AG04449 (cell line): ENCODE measurements at regions of chr14 and their contacts with region 1.

Region 1: DNA sequence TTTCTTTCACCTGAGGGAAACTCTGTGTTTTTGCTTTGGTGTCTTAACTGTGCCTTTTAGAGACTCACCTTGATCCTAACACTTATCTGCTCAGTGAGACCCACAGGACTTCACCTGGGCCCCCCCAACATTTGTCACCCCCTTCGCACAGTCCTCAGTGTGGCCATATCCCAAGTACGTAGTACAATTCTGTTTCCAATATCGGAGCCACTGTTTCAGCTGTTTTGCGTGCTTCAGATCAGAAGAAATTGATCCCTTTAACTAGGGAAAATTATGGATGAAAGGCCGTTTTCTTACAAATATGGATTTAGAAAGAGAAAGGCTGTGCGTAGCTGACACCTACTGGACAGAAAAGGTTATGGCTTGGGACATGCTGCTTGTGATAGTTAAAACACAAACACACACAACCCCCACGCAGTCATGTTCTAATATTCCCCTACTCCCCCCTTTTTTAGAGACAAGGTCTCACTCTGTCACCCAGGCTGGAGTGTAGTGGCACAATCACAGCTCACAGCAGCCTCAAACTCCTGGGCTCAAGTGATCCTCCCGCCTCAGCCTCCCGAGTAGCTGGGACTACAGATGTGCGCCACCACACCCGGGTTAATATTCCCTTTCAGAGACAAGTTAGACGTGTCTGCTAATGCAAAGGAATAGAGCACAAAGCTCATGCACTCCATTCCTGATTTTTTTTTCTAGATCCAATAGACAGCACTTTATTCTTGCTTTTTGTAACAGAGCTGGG is 3.6 kb upstream of the SLC7A8 start:
- DNase-seq: no peak
- H3K4me3 ChIP-seq: no peak overlapping the region
- CTCF ChIP-seq: peak; percentile 66

Region 2: DNA sequence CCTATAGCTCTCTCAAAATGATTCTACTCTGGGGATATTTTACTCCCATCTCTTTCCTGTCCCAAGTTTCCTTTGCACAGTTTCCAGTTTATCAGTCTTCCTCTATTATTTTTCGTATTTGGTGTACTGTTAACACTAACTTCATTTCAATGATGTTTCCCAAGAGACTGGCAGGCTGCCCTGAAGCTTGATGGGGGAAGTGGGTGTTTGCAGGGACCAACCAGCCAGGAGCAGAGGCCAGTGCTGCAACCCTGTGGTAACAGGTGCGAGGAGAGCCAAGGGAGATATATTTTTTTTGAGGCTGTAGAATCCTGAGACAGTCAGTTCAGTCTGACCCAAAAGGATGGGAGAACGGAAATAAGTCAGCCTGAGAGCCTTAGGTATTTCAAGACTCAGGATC is 56.2 kb before region 1 on chr14:
- CTCF ChIA-PET with region 1: interaction called, 1,439 read pairs
- POLR2A ChIA-PET with region 1: no interaction called
- DNase-seq: no peak
- H3K4me3 ChIP-seq: no peak overlapping the region
- CTCF ChIP-seq: no peak

Region 3: GRCh38 chr14:23154964-23155587 is 32.0 kb before region 1 on chr14:
- CTCF ChIA-PET with region 1: interaction called, 32 read pairs
- POLR2A ChIA-PET with region 1: interaction called, 4 read pairs
- DNase-seq: peak; percentile 61
- H3K4me3 ChIP-seq: no peak overlapping the region
- CTCF ChIP-seq: no peak

Region 4: DNA sequence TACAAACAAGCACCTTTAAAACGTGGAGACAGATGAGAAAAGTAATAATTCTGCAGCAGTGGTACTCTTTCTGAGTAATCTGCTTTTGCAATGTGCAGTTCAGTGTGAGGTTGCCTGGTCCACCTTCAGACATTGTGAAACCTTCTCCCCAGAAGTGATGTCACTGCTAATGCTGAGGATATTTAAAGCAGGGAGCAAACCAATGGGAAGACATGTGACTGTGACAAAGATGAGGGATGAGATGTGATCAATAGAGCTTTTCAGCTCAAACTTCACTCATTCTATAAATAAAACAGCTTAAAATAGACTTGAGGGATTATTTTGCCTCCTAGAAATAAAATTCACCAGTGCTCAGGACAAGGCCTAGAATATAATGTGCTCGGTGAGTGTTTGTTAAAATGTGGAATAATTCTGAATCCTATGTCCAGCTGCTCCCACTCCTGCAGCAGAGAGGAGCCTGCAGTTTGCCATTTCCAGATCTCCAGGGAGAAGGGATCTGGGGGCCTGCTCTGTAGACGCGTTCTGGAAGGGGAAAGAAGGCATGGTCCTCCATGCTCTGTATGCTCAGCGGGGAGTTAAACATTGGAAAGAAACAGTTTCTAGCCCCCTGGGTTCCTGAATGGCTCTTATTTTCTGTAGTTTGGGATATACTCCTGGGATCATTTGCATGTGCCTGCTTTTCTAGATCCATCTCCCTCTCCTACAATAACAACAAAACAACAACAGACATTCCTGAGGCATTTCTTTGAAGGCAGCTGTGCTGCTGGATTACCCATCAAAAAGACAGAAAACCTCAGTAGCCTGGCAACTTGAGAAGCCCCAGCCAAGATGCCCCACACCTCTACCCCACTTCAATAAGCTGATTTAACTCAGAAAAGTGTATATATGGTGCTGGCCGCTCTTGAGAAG is 12.6 kb before region 1 on chr14:
- CTCF ChIA-PET with region 1: interaction called, 87 read pairs
- POLR2A ChIA-PET with region 1: no interaction called
- DNase-seq: no peak
- H3K4me3 ChIP-seq: no peak overlapping the region
- CTCF ChIP-seq: no peak

Region 5: DNA sequence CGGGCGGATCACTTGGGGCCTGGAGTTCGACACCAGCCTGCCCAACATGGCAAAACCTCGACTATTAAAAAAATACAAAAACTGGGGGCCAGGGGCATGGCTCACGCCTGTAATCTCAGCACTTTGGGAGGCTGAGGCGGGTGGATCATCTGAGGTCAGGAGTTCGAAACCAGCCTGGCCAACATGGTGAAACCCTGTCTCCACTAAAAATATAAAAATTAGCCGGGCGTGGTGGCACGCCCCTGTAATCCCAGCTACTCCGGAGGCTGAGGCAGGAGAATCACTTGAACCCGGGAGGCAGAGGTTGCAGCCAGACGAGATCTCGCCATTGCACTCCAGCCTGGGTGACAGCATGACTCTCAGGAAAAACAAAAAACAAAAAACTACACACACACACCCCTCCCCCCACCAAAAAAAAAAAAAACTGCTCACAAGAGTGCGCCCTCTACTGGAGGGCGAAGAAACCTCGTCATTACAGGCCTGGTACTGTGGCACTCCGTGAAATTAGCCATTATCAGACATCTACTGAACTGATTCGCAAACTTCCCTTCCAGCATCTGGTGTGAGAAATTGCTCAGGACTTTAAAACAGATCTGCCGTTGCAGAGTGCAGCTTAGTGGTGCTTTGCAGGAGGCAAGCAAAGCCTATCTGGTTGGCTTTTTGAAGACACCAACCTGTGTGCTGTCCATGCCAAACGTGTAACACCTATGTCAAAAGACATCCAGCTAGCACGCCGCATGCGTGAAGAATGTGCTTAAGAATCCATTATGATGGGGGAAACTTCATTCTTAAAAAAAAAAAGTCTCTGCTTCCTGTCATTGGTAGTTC is 107.9 kb after region 1 on chr14:
- CTCF ChIA-PET with region 1: interaction called, 12 read pairs
- POLR2A ChIA-PET with region 1: no interaction called
- DNase-seq: no peak
- H3K4me3 ChIP-seq: no peak overlapping the region
- CTCF ChIP-seq: peak; percentile 61

Region 6: GRCh38 chr14:23555882-23556699 is 369.0 kb after region 1 on chr14 and contains the start of gene THTPA:
- CTCF ChIA-PET with region 1: no interaction called
- POLR2A ChIA-PET with region 1: no interaction called
- DNase-seq: no peak
- H3K4me3 ChIP-seq: peak within 1 kb of the TSS; percentile 82
- CTCF ChIP-seq: no peak